PC-9 (cell line): ENCODE measurements at regions of chr3 and their contacts with region 1.

Region 1: DNA sequence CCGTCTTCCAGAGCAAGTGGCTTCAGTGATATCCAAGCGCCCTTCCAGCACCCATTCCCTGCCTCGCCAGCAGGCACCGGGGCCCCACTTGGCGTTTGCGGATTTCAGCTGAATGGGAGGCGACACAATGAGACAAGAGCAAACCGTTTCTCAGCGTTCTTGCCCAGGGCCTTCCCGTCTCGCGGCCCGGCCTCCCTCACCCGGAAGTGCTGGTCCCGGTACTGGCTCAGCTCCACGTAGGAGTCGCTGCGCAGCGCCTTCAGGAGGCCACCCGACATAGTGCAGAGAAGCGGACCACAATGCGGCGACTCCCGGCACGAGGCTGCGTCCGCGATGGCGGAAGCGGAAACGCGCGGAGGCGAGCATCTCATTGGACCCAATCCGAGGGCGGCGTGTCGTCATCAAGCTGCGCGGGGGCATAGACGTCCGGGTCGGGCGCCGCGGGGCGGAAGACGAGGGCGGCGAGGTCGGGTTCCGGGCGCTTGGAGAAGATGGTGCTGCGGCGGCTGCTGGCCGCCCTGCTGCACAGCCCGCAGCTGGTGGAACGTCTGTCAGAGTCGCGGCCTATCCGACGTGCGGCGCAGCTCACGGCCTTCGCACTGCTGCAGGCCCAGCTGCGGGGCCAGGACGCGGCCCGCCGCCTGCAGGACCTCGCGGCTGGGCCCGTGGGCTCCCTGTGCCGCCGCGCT is at the start of gene NCBP2:
- DNase-seq: peak; percentile 95 to 100
- H3K4me3 ChIP-seq: peak within 1 kb of the TSS; percentile 92
- H3K27ac ChIP-seq: peak within 1 kb of the TSS; percentile 90
- H3K4me1 ChIP-seq: peaks cover 20% of the 10 kb centered on the region
- H3K27me3 ChIP-seq: no peaks in the 10 kb centered on the region
- CTCF ChIP-seq: peak; percentile 69
- total RNA-seq, gene NCBP2: 83.8 and 91.8 TPM in 2 replicates

Region 2: DNA sequence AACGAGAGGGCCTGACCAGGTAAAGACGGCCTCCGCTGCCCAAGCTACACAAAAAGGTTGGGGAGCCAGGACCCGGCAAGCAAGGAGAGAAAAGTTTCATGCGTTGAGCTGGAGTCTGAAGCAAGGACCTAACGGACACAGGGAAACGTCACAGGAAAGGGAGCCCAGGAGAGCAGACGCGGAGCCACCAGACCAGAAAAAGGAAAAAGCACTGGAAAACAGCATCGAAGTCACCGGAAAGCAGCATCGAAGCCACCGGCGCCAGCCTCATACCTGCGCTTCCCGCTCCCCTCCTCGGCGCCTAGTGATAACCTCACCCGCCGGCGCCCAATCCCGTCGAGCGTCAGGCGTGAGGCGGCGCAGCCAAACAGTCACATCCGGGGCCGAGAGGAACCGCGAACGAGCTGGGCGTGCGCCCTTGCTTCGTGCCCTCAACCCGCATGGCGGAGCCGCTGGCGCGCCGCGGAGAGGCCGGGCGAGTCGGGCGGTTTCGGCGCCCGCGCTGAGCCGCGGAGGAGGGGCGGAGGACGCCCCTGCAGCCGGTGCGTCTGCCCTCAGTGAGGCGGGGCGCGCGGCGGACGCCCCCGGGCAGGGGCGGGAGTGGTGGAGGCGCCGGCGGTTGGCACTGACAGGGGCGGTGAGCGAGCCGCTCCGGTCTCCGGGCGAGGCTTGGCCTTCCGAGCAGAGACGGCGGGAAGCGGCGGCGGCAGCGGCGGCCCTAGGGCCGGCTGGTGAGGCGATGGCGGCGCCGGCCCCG is 373.9 kb before region 1 on chr3 and contains the starts of genes FBXO45 and WDR53:
- CTCF ChIA-PET with region 1: no interaction called
- POLR2A ChIA-PET with region 1: interaction called, 9 read pairs
- intact Hi-C with region 1: loop called (anchors 2 kb)
- DNase-seq: peak; percentile 90 to 98
- H3K4me3 ChIP-seq: peak within 1 kb of the TSS; percentile 75
- H3K27ac ChIP-seq: peak within 1 kb of the TSS; percentile 30
- H3K4me1 ChIP-seq: peaks cover 34% of the 10 kb centered on the region
- H3K27me3 ChIP-seq: no peaks in the 10 kb centered on the region
- CTCF ChIP-seq: no peak
- total RNA-seq, gene FBXO45: 16.5 and 21.3 TPM in 2 replicates
- total RNA-seq, gene WDR53: 33.5 and 34.8 TPM in 2 replicates

Region 3: GRCh38 chr3:196684548-196685407 is 257.6 kb before region 1 on chr3:
- CTCF ChIA-PET with region 1: no interaction called
- POLR2A ChIA-PET with region 1: no interaction called
- intact Hi-C with region 1: loop called (anchors 10 kb)
- DNase-seq: peak; percentile 45 to 69
- H3K4me3 ChIP-seq: no peak overlapping the region
- H3K27ac ChIP-seq: no peak overlapping the region
- H3K4me1 ChIP-seq: 0 out of 2 replicates have a peak, but pooled peaks cover 9% of the 10 kb centered on the region
- H3K27me3 ChIP-seq: no peaks in the 10 kb centered on the region
- CTCF ChIP-seq: peak; percentile 97

Region 4: GRCh38 chr3:196711838-196712513 is 230.4 kb before region 1 on chr3 and contains the starts of genes CEP19 and PIGX:
- CTCF ChIA-PET with region 1: no interaction called
- POLR2A ChIA-PET with region 1: no interaction called
- intact Hi-C with region 1: loop called (anchors 5 kb)
- DNase-seq: peak; percentile 67 to 94
- H3K4me3 ChIP-seq: peak within 1 kb of the TSS; percentile 93
- H3K27ac ChIP-seq: peak within 1 kb of the TSS; percentile 43
- H3K4me1 ChIP-seq: peaks cover 18% of the 10 kb centered on the region
- H3K27me3 ChIP-seq: no peaks in the 10 kb centered on the region
- CTCF ChIP-seq: no peak
- total RNA-seq, gene CEP19: 3.4 and 5.5 TPM in 2 replicates
- total RNA-seq, gene PIGX: 47.6 and 52.9 TPM in 2 replicates

Region 5: GRCh38 chr3:196837819-196838420 is 104.5 kb before region 1 on chr3:
- CTCF ChIA-PET with region 1: no interaction called
- POLR2A ChIA-PET with region 1: no interaction called
- intact Hi-C with region 1: loop called (anchors 10 kb)
- DNase-seq: peak; percentile 50 to 55
- H3K4me3 ChIP-seq: no peak overlapping the region
- H3K27ac ChIP-seq: no peak overlapping the region
- H3K4me1 ChIP-seq: no peaks in the 10 kb centered on the region
- H3K27me3 ChIP-seq: no peaks in the 10 kb centered on the region
- CTCF ChIP-seq: peak; percentile 82

Region 6: GRCh38 chr3:196867507-196868296 is 74.7 kb before region 1 on chr3 and contains the start of gene SENP5:
- CTCF ChIA-PET with region 1: no interaction called
- POLR2A ChIA-PET with region 1: interaction called, 3 read pairs
- intact Hi-C with region 1: loop called (anchors 5 kb)
- DNase-seq: peak; percentile 80 to 94
- H3K4me3 ChIP-seq: peak within 1 kb of the TSS; percentile 95
- H3K27ac ChIP-seq: peak within 1 kb of the TSS; percentile 40
- H3K4me1 ChIP-seq: peaks cover 15% of the 10 kb centered on the region
- H3K27me3 ChIP-seq: no peaks in the 10 kb centered on the region
- CTCF ChIP-seq: no peak
- total RNA-seq, gene SENP5: 52.3 and 60.9 TPM in 2 replicates